MCF 10A (cell line): ENCODE measurements at regions of chr19 and their contacts with region 1.

Region 1: DNA sequence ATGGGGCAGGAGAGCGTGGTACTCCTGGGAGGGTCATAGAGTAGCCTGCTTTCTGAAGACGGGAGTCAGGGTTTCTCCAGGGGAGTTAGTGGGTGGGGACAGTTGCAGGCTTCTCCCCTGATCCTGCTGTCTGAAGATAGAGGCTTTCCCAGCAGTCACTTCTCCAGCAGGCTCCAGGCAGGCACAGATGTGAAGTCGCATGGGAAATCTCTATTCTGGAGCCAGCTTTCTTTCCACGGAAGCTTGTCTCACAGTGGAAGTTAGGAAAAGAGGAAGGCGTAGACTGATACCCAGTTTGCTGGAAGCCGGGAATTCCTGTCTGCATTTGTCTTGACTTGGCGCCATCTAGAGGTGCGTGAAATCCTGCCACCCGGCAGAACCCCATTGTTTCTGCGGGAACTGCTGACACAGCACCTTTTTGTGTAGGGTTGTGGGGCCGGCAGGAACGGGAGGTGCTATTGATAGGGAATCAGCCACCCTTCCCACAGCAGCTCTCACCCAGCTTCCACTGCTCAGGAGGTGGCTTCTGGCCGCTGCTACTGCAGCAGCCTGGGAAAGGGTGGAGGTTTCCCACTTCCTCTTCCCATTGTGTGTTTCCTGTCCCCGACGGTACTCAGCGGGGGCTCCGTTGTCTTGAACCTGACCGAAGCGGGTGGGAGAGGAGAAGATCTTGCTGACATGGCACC is 28.5 kb upstream of the NPAS1 start:
- DNase-seq: peak; percentile 88
- H3K4me3 Mint-ChIP-seq: no peak overlapping the region
- H3K27ac Mint-ChIP-seq: peak overlapping the region; percentile 19
- H3K4me1 Mint-ChIP-seq: no peaks in the 10 kb centered on the region
- H3K27me3 Mint-ChIP-seq: no peaks in the 10 kb centered on the region
- CTCF ChIP-seq: peak; percentile 89

Region 2: GRCh38 chr19:46840136-46840942 is 150.8 kb before region 1 on chr19:
- CTCF ChIA-PET with region 1: interaction called, 12 read pairs
- POLR2A ChIA-PET with region 1: no interaction called
- intact Hi-C with region 1: no loop called
- DNase-seq: peak; percentile 71
- H3K4me3 Mint-ChIP-seq: no peak overlapping the region
- H3K27ac Mint-ChIP-seq: no peak overlapping the region
- H3K4me1 Mint-ChIP-seq: peaks cover 18% of the 10 kb centered on the region
- H3K27me3 Mint-ChIP-seq: no peaks in the 10 kb centered on the region
- CTCF ChIP-seq: peak; percentile 79

Region 3: GRCh38 chr19:46860125-46860845 is 130.8 kb before region 1 on chr19:
- CTCF ChIA-PET with region 1: interaction called, 67 read pairs
- POLR2A ChIA-PET with region 1: interaction called, 13 read pairs
- intact Hi-C with region 1: loop called (anchors 1 kb)
- DNase-seq: peak; percentile 99
- H3K4me3 Mint-ChIP-seq: no peak overlapping the region
- H3K27ac Mint-ChIP-seq: peak overlapping the region; percentile 71
- H3K4me1 Mint-ChIP-seq: peaks cover 11% of the 10 kb centered on the region
- H3K27me3 Mint-ChIP-seq: no peaks in the 10 kb centered on the region
- CTCF ChIP-seq: no peak

Region 4: GRCh38 chr19:46932346-46932745 is 58.8 kb before region 1 on chr19:
- CTCF ChIA-PET with region 1: interaction called, 10 read pairs
- POLR2A ChIA-PET with region 1: no interaction called
- intact Hi-C with region 1: no loop called
- DNase-seq: peak; percentile 61
- H3K4me3 Mint-ChIP-seq: no peak overlapping the region
- H3K27ac Mint-ChIP-seq: no peak overlapping the region
- H3K4me1 Mint-ChIP-seq: peaks cover 20% of the 10 kb centered on the region
- H3K27me3 Mint-ChIP-seq: no peaks in the 10 kb centered on the region
- CTCF ChIP-seq: no peak

Region 5: GRCh38 chr19:46975925-46976782 is 15.0 kb before region 1 on chr19:
- CTCF ChIA-PET with region 1: interaction called, 12 read pairs
- POLR2A ChIA-PET with region 1: interaction called, 5 read pairs
- intact Hi-C with region 1: no loop called
- DNase-seq: peak; percentile 61
- H3K4me3 Mint-ChIP-seq: peak overlapping the region; percentile 28
- H3K27ac Mint-ChIP-seq: peak overlapping the region; percentile 43
- H3K4me1 Mint-ChIP-seq: peaks cover 27% of the 10 kb centered on the region
- H3K27me3 Mint-ChIP-seq: no peaks in the 10 kb centered on the region
- CTCF ChIP-seq: no peak

Region 6: DNA sequence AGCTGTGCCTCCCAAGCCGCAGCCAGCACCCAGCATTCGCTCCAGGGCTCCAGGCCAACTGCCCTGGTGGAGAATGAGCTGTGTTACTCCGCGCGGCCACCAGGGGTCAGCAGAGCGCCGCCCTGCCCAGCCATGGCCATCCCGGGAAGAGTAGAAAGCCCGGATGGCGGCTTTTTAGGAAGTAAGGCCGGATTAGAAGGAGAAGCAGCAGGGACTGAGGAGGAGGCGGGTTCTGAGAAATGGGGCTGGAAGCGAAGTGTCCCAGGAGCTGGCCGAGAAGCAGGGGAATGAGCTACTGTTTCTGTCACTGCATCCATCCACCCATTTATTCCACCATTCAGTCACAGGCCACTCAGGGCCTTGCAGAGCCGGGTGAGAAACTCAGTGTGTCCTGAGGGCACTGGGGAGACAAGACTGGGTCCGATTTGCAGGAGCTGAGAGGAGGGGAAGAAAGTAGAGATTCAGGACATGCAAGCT is 21.9 kb after region 1 on chr19:
- CTCF ChIA-PET with region 1: interaction called, 10 read pairs
- POLR2A ChIA-PET with region 1: interaction called, 3 read pairs
- intact Hi-C with region 1: no loop called
- DNase-seq: peak; percentile 87
- H3K4me3 Mint-ChIP-seq: peak overlapping the region; percentile 45
- H3K27ac Mint-ChIP-seq: no peak overlapping the region
- H3K4me1 Mint-ChIP-seq: peaks cover 12% of the 10 kb centered on the region
- H3K27me3 Mint-ChIP-seq: no peaks in the 10 kb centered on the region
- CTCF ChIP-seq: peak; percentile 93

Region 7: GRCh38 chr19:47075179-47075810 is 84.2 kb after region 1 on chr19:
- CTCF ChIA-PET with region 1: no interaction called
- POLR2A ChIA-PET with region 1: no interaction called
- intact Hi-C with region 1: no loop called
- DNase-seq: no peak
- H3K4me3 Mint-ChIP-seq: no peak overlapping the region
- H3K27ac Mint-ChIP-seq: no peak overlapping the region
- H3K4me1 Mint-ChIP-seq: no peaks in the 10 kb centered on the region
- H3K27me3 Mint-ChIP-seq: no peaks in the 10 kb centered on the region
- CTCF ChIP-seq: no peak

Region 8: DNA sequence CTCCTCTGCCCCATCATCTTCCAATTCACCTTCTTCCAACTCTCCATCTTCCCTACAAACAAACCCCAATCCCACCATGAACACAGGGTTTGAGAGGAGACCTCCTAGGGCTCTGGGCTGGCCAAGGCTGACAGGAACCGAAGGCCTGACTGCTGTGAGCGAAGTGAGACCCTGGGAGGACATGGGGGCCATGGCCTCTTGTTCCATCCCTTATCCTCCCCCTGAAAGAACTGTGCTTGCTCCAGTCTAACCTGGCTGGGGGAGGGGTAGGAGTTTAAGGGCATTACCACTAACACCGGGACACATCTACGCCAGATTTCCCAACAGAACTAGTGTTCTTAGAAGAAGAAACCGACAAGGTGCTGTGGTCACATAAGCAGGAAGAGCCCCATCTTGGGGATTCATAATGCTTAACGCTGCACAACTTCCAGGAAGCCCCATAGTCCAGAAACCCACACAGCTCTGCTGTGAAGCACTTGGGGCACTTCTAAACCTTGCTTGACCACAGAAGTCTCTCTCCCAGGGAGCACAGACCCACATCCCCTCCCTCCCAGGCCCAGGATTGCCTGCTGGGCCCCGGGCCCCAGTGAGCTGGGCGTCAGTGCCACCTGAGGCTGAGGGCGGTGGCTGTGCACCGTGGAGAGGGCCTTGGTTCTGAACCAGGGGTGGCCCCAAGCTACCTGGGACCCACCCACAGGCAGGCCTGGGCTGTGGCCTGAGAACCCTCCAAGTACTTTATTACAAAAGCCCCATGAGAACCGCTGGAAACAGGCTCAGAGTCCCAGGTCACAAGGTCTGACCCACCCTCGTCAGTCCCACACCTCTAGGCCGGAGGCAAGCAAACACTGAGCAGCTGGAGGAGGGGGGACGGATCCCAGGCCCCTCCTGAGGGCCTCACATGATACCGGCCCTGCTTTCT is 103.7 kb after region 1 on chr19:
- CTCF ChIA-PET with region 1: no interaction called
- POLR2A ChIA-PET with region 1: no interaction called
- intact Hi-C with region 1: no loop called
- DNase-seq: no peak
- H3K4me3 Mint-ChIP-seq: no peak overlapping the region
- H3K27ac Mint-ChIP-seq: peak overlapping the region; percentile 92
- H3K4me1 Mint-ChIP-seq: peaks cover 21% of the 10 kb centered on the region
- H3K27me3 Mint-ChIP-seq: no peaks in the 10 kb centered on the region
- CTCF ChIP-seq: no peak

Region 9: GRCh38 chr19:47130591-47131227 is 139.6 kb after region 1 on chr19 and contains the start of gene SAE1:
- CTCF ChIA-PET with region 1: no interaction called
- POLR2A ChIA-PET with region 1: no interaction called
- intact Hi-C with region 1: no loop called
- DNase-seq: peak; percentile 98
- H3K4me3 Mint-ChIP-seq: peak within 1 kb of the TSS; percentile 99
- H3K27ac Mint-ChIP-seq: peak within 1 kb of the TSS; percentile 92
- H3K4me1 Mint-ChIP-seq: peaks cover 35% of the 10 kb centered on the region
- H3K27me3 Mint-ChIP-seq: no peaks in the 10 kb centered on the region
- CTCF ChIP-seq: peak; percentile 23
- total RNA-seq, gene SAE1: 76.1 and 81.7 TPM in 2 replicates